ENCODE measurements at regions of chr18 and their contacts with region 1.

Region 1: DNA sequence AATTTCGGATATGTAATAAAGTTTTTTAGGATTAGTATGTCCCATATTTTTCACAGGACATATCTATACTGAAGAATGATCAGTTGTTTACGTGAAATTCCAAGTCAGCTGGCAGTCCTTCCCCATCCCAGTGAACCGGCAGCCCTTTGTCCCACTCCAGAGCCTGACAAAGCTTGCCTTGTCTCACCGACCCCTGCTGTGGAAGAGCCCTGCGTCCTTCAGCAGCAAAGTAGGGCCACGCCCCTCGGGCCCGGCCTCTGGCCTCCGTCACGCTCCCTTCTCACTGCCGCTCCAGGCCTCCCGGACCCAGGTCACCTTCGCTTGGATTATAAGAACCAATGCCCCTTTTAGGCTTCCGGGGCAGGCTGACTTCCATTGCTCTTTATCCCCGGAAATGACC is 89.8 kb upstream of the TGIF1 start:
- DNase-seq: no peak
- ATAC-seq: no peak
- H3K4me3 ChIP-seq: no peak overlapping the region
- H3K4me3 Mint-ChIP-seq: no peak overlapping the region
- H3K27ac ChIP-seq: no peak overlapping the region
- H3K27ac Mint-ChIP-seq: no peak overlapping the region
- H3K4me1 ChIP-seq: no peaks in the 10 kb centered on the region
- H3K4me1 Mint-ChIP-seq: peaks cover 11 to 12% (median 12%) of the 10 kb centered on the region in 3 donors
- H3K27me3 ChIP-seq: peaks cover 0 to 2% of the 10 kb centered on the region in 2 experiments
- H3K27me3 Mint-ChIP-seq: peaks cover 4 to 6% of the 10 kb centered on the region in 2 donors

Region 2: GRCh38 chr18:3151399-3152264 is 208.6 kb before region 1 on chr18:
- CTCF ChIA-PET with region 1: no interaction called
- POLR2A ChIA-PET with region 1: no interaction called
- DNase-seq: peak in 1 of 35 experiments; percentile 60
- ATAC-seq: no peak
- H3K4me3 ChIP-seq: no peak overlapping the region
- H3K4me3 Mint-ChIP-seq: no peak overlapping the region
- H3K27ac ChIP-seq: no peak overlapping the region
- H3K27ac Mint-ChIP-seq: no peak overlapping the region
- H3K4me1 ChIP-seq: peaks cover 0 to 2% of the 10 kb centered on the region in 2 experiments
- H3K4me1 Mint-ChIP-seq: peaks cover 0 to 10% (median 6%) of the 10 kb centered on the region in 3 donors
- H3K27me3 ChIP-seq: no peaks in the 10 kb centered on the region
- H3K27me3 Mint-ChIP-seq: no peaks in the 10 kb centered on the region

Region 3: DNA sequence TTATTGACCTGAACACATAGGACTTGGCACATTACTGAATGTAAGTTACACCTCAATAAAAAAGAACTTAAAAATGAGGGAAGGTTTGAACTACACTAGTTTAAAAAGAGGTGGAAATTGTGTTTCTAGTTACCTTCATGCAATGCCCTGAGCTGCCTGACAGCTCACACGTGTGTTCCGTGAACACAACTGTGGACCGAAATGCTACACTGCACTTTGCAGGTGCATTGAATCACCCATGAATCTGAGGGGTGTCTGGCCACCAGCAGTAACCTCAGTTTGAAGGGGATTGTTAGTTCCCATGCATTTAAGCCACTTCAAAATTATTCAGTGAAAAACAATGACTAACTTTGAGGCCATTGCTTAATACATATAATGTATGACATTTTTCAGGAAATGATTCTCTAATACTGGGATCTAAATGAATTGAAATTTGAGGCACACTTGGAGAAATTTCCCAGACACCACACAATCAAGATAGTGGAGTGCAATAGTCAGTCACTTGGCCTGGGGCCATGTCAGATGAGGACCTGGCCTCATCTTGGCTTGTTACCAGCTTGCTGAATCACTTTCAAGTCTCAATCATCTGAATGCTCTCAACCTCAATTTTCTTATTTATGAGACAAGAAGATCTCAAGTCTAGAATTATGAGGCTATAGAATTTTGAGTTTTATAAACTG is 38.9 kb before region 1 on chr18:
- CTCF ChIA-PET with region 1: no interaction called
- POLR2A ChIA-PET with region 1: no interaction called
- DNase-seq: no peak
- ATAC-seq: no peak
- H3K4me3 ChIP-seq: no peak overlapping the region
- H3K4me3 Mint-ChIP-seq: no peak overlapping the region
- H3K27ac ChIP-seq: no peak overlapping the region
- H3K27ac Mint-ChIP-seq: no peak overlapping the region
- H3K4me1 ChIP-seq: no peaks in the 10 kb centered on the region
- H3K4me1 Mint-ChIP-seq: peaks cover 0 to 4% (median 0%) of the 10 kb centered on the region in 3 donors
- H3K27me3 ChIP-seq: no peaks in the 10 kb centered on the region
- H3K27me3 Mint-ChIP-seq: peaks cover 3 to 4% of the 10 kb centered on the region in 2 donors

Region 4: GRCh38 chr18:3380384-3380961 is 20.3 kb after region 1 on chr18:
- CTCF ChIA-PET with region 1: no interaction called
- POLR2A ChIA-PET with region 1: interaction called in 1 of 2 experiments, 12 read pairs
- DNase-seq: peak in 1 of 35 experiments; percentile 54
- ATAC-seq: peak in 1 of 4 experiments; percentile 53
- H3K4me3 ChIP-seq: no peak overlapping the region
- H3K4me3 Mint-ChIP-seq: no peak overlapping the region
- H3K27ac ChIP-seq: no peak overlapping the region
- H3K27ac Mint-ChIP-seq: no peak overlapping the region
- H3K4me1 ChIP-seq: no peaks in the 10 kb centered on the region
- H3K4me1 Mint-ChIP-seq: peaks cover 0 to 2% (median 0%) of the 10 kb centered on the region in 3 donors
- H3K27me3 ChIP-seq: no peaks in the 10 kb centered on the region
- H3K27me3 Mint-ChIP-seq: peaks cover 6 to 7% of the 10 kb centered on the region in 2 donors

Region 5: GRCh38 chr18:3599861-3600260 is 239.7 kb after region 1 on chr18:
- CTCF ChIA-PET with region 1: no interaction called
- POLR2A ChIA-PET with region 1: no interaction called
- DNase-seq: no peak
- ATAC-seq: no peak
- H3K4me3 ChIP-seq: no peak overlapping the region
- H3K4me3 Mint-ChIP-seq: no peak overlapping the region
- H3K27ac ChIP-seq: no peak overlapping the region
- H3K27ac Mint-ChIP-seq: no peak overlapping the region
- H3K4me1 ChIP-seq: peaks cover 42 to 70% of the 10 kb centered on the region in 2 experiments
- H3K4me1 Mint-ChIP-seq: peaks cover 27 to 43% (median 38%) of the 10 kb centered on the region in 3 donors
- H3K27me3 ChIP-seq: no peaks in the 10 kb centered on the region
- H3K27me3 Mint-ChIP-seq: no peaks in the 10 kb centered on the region

Region 6: GRCh38 chr18:3722320-3723000 is 362.2 kb after region 1 on chr18:
- CTCF ChIA-PET with region 1: no interaction called
- POLR2A ChIA-PET with region 1: no interaction called
- DNase-seq: no peak
- ATAC-seq: no peak
- H3K4me3 ChIP-seq: no peak overlapping the region
- H3K4me3 Mint-ChIP-seq: no peak overlapping the region
- H3K27ac ChIP-seq: no peak overlapping the region
- H3K27ac Mint-ChIP-seq: no peak overlapping the region
- H3K4me1 ChIP-seq: no peaks in the 10 kb centered on the region
- H3K4me1 Mint-ChIP-seq: no peaks in the 10 kb centered on the region
- H3K27me3 ChIP-seq: peaks cover 0 to 12% of the 10 kb centered on the region in 2 experiments
- H3K27me3 Mint-ChIP-seq: peaks cover 24 to 30% of the 10 kb centered on the region in 2 donors

Measured in T-cell (primary cell).